ENCODE measurements at regions of chr17 and their contacts with region 1.

Region 1: DNA sequence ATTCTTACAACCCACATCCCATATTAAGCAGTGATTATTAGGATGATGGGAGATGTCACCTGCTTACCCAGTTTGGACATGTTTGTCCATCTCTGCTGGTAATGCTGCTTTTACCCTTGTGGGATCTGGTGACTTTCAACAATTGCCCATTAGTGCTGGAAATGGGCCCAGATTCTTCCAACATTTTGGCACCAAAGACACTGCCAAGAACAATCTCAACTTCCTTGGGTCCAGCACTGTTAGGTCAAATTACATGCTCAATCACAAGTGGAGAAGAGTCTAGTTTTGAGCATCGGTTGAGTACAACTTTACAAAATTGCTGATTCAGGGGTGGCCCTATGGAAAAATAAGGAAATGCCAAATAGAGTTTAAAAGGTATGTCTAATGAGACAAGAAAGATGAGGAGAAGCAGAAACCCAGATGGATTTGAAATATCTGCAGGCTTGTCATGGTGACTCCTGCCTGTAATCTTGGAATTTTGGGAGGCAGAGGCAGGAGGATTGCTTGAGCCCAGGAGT is 13.0 kb upstream of the ZFP3 start:
- DNase-seq: no peak
- H3K4me3 ChIP-seq: no peak overlapping the region
- H3K4me3 Mint-ChIP-seq: no peak overlapping the region
- H3K27ac ChIP-seq: no peak overlapping the region
- H3K27ac Mint-ChIP-seq: no peak overlapping the region
- H3K4me1 ChIP-seq: no peaks in the 10 kb centered on the region
- H3K4me1 Mint-ChIP-seq: peaks cover 3 to 10% (median 7%) of the 10 kb centered on the region in 4 donors
- H3K27me3 ChIP-seq: no peaks in the 10 kb centered on the region
- H3K27me3 Mint-ChIP-seq: no peaks in the 10 kb centered on the region

Region 2: GRCh38 chr17:4908301-4908700 is 157.0 kb before region 1 on chr17:
- CTCF ChIA-PET with region 1: interaction called, 14 read pairs
- POLR2A ChIA-PET with region 1: no interaction called
- intact Hi-C with region 1: loop called (anchors 1 kb)
- DNase-seq: no peak
- H3K4me3 ChIP-seq: no peak overlapping the region
- H3K4me3 Mint-ChIP-seq: no peak overlapping the region
- H3K27ac ChIP-seq: peak overlapping the region; percentile 5
- H3K27ac Mint-ChIP-seq: no peak overlapping the region
- H3K4me1 ChIP-seq: peaks cover 22% of the 10 kb centered on the region
- H3K4me1 Mint-ChIP-seq: peaks cover 4 to 11% (median 6%) of the 10 kb centered on the region in 4 donors
- H3K27me3 ChIP-seq: no peaks in the 10 kb centered on the region
- H3K27me3 Mint-ChIP-seq: no peaks in the 10 kb centered on the region

Region 3: GRCh38 chr17:4997302-4998026 is 67.8 kb before region 1 on chr17 and contains the starts of genes INCA1 and KIF1C:
- CTCF ChIA-PET with region 1: interaction called, 16 read pairs
- POLR2A ChIA-PET with region 1: interaction called, 3 read pairs
- intact Hi-C with region 1: no loop called
- DNase-seq: peak; percentile 88 to 94 (median 92)
- H3K4me3 ChIP-seq: peak within 1 kb of the TSS; percentile 36 to 72
- H3K4me3 Mint-ChIP-seq: peak within 1 kb of the TSS; percentile 78 to 91 (median 84)
- H3K27ac ChIP-seq: peak within 1 kb of the TSS; percentile 79
- H3K27ac Mint-ChIP-seq: peak within 1 kb of the TSS; percentile 75 to 94 (median 87)
- H3K4me1 ChIP-seq: peaks cover 22% of the 10 kb centered on the region
- H3K4me1 Mint-ChIP-seq: peaks cover 10 to 42% (median 24%) of the 10 kb centered on the region in 4 donors
- H3K27me3 ChIP-seq: no peaks in the 10 kb centered on the region
- H3K27me3 Mint-ChIP-seq: no peaks in the 10 kb centered on the region
- total RNA-seq, gene INCA1: 0.36 to 0.67 TPM
- total RNA-seq, gene KIF1C: 29.8 to 36.9 TPM

Region 4: GRCh38 chr17:5031365-5032082 is 33.8 kb before region 1 on chr17:
- CTCF ChIA-PET with region 1: interaction called, 271 read pairs
- POLR2A ChIA-PET with region 1: interaction called, 54 read pairs
- intact Hi-C with region 1: loop called (anchors 1 kb)
- DNase-seq: peak; percentile 77 to 83 (median 81)
- H3K4me3 ChIP-seq: peak overlapping the region in 1 of 2 donors; percentile 23
- H3K4me3 Mint-ChIP-seq: peak overlapping the region; percentile 79 to 89 (median 87)
- H3K27ac ChIP-seq: peak overlapping the region; percentile 67
- H3K27ac Mint-ChIP-seq: peak overlapping the region; percentile 90 to 94 (median 93)
- H3K4me1 ChIP-seq: peaks cover 25% of the 10 kb centered on the region
- H3K4me1 Mint-ChIP-seq: peaks cover 11 to 38% (median 17%) of the 10 kb centered on the region in 4 donors
- H3K27me3 ChIP-seq: no peaks in the 10 kb centered on the region
- H3K27me3 Mint-ChIP-seq: no peaks in the 10 kb centered on the region

Region 5: GRCh38 chr17:5042157-5043022 is 22.9 kb before region 1 on chr17:
- CTCF ChIA-PET with region 1: interaction called, 32 read pairs
- POLR2A ChIA-PET with region 1: interaction called, 11 read pairs
- intact Hi-C with region 1: loop called (anchors 2 kb)
- DNase-seq: peak in 4 of 5 donors; percentile 26 to 42 (median 34)
- H3K4me3 ChIP-seq: peak overlapping the region; percentile 49 to 65
- H3K4me3 Mint-ChIP-seq: peak overlapping the region; percentile 86 to 96 (median 92)
- H3K27ac ChIP-seq: peak overlapping the region; percentile 54
- H3K27ac Mint-ChIP-seq: peak overlapping the region; percentile 83 to 97 (median 95)
- H3K4me1 ChIP-seq: peaks cover 57% of the 10 kb centered on the region
- H3K4me1 Mint-ChIP-seq: peaks cover 33 to 69% (median 53%) of the 10 kb centered on the region in 4 donors
- H3K27me3 ChIP-seq: no peaks in the 10 kb centered on the region
- H3K27me3 Mint-ChIP-seq: no peaks in the 10 kb centered on the region

Region 6: GRCh38 chr17:5049314-5049895 is 15.9 kb before region 1 on chr17:
- CTCF ChIA-PET with region 1: interaction called, 32 read pairs
- POLR2A ChIA-PET with region 1: interaction called, 11 read pairs
- intact Hi-C with region 1: loop called (anchors 1 kb)
- DNase-seq: peak; percentile 79 to 89 (median 85)
- H3K4me3 ChIP-seq: no peak overlapping the region
- H3K4me3 Mint-ChIP-seq: peak overlapping the region in 7 of 8 donors; percentile 61 to 89 (median 74)
- H3K27ac ChIP-seq: peak overlapping the region; percentile 42
- H3K27ac Mint-ChIP-seq: peak overlapping the region; percentile 93 to 98 (median 95)
- H3K4me1 ChIP-seq: peaks cover 60% of the 10 kb centered on the region
- H3K4me1 Mint-ChIP-seq: peaks cover 32 to 60% (median 47%) of the 10 kb centered on the region in 4 donors
- H3K27me3 ChIP-seq: no peaks in the 10 kb centered on the region
- H3K27me3 Mint-ChIP-seq: no peaks in the 10 kb centered on the region

Region 7: DNA sequence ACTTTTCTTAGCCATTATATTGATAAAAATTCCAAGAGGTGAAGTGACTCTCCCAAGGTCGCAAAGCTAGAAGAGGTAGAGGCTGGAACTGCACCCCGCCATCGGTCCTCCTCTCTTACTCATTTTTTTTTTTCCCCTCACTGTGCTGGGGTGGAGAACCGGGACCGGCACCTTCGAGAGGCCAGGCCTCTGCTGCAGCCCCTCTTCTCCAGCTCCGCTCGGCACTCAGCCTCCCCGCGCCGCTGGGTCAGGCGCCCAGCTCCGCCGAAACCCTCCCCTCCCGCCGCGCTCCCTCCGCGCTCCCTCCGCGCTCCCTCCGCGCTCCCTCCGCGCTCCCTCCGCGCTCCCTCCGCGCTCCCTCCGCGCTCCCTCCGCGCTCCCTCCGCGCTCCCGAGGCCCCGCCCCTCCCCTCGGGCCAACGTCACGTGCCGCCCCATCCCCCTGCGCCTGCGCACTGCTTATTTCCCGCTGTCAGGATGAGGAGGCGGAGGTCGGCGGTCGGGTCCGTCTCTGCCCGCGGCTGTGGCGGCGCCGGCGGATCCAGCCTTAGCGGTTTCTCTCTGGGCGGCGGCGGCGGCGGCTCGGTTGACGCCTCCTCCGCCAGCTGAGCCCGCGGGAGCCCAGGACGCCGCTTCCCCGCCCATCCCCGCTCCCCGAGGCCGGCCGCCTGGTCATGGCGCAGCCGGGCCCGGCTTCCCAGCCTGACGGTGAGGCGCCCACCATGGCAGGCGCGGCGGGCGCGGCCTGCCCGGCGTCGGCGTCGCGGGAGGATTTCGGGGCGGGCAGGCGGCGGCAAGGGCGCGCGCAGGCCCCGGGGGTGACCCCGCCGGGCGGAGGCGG is 216.7 kb after region 1 on chr17 and contains the start of gene RABEP1:
- CTCF ChIA-PET with region 1: no interaction called
- POLR2A ChIA-PET with region 1: no interaction called
- intact Hi-C with region 1: no loop called
- DNase-seq: peak; percentile 90 to 93 (median 92)
- H3K4me3 ChIP-seq: peak within 1 kb of the TSS; percentile 28 to 54
- H3K4me3 Mint-ChIP-seq: peak within 1 kb of the TSS; percentile 88 to 95 (median 92)
- H3K27ac ChIP-seq: peak within 1 kb of the TSS; percentile 60
- H3K27ac Mint-ChIP-seq: peak within 1 kb of the TSS; percentile 90 to 95 (median 93)
- H3K4me1 ChIP-seq: peaks cover 43% of the 10 kb centered on the region
- H3K4me1 Mint-ChIP-seq: peaks cover 23 to 51% (median 33%) of the 10 kb centered on the region in 4 donors
- H3K27me3 ChIP-seq: no peaks in the 10 kb centered on the region
- H3K27me3 Mint-ChIP-seq: no peaks in the 10 kb centered on the region
- total RNA-seq, gene RABEP1: 53.9 to 54.2 TPM

Measured in CD4-positive, alpha-beta memory T cell (primary cell).